ENCODE measurements at regions of chr2 and their contacts with region 1.

Region 1: DNA sequence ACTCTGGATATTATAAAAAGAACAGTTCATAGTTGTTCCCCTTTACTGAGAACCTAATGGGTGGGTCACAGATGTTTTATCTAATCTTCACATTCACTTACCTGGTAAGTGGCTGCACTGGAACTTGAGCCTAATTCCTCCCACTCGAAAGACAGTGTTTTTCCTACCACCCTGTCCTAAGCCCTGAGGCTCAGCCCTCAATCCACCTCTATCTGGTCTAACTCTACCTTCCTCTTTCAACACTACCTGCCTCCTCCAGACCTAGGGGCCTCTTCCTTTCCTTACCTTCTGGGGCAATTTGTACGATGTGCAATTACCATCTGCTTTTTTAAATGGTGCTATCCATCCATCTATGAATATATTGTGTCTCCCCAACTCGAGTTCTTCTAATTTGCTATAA is 9.7 kb upstream of the KIF3C start:
- DNase-seq: no peak
- H3K4me3 ChIP-seq: no peak overlapping the region
- CTCF ChIP-seq: no peak

Region 2: GRCh38 chr2:25586726-25587144 is 405.2 kb before region 1 on chr2:
- CTCF ChIA-PET with region 1: no interaction called
- POLR2A ChIA-PET with region 1: no interaction called
- DNase-seq: no peak
- H3K4me3 ChIP-seq: no peak overlapping the region
- CTCF ChIP-seq: no peak

Region 3: GRCh38 chr2:25976983-25977741 is 14.8 kb before region 1 on chr2:
- CTCF ChIA-PET with region 1: interaction called, 27 read pairs
- POLR2A ChIA-PET with region 1: no interaction called
- DNase-seq: no peak
- H3K4me3 ChIP-seq: no peak overlapping the region
- CTCF ChIP-seq: no peak

Region 4: DNA sequence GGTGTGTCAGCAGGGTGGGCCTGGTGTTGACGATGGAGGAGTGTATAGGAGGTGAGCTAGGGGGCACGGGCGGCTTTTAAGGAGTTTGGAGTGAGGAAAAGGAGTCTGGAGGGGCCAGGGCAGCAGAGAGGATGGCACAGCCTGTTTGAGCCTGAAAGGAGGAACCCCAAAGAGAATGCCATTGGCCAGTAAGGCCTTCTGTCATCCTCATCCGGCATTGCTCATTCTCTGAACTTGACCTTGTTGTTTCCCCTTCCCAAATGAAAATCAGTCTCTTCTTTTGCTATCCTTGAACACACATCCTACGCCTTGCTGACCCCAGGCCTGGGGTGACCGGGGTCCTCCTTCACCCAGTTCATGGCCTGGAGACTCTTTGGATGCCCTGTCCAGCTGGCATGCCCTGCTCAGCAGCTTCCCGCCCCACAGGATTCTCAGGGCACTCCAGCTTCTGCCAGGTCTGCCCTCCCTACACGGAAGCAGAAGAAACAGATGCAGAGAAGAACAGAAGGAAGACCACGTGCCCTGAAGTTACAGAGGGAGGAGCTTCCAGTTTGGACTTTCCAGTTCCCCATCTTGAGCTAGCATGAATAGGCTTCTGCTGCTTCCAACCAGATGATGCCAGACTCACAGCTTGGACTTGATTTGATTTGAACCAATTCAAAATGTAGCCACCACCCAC is 10.8 kb after region 1 on chr2:
- CTCF ChIA-PET with region 1: interaction called, 19 read pairs
- POLR2A ChIA-PET with region 1: no interaction called
- DNase-seq: no peak
- H3K4me3 ChIP-seq: no peak overlapping the region
- CTCF ChIP-seq: no peak

Region 5: DNA sequence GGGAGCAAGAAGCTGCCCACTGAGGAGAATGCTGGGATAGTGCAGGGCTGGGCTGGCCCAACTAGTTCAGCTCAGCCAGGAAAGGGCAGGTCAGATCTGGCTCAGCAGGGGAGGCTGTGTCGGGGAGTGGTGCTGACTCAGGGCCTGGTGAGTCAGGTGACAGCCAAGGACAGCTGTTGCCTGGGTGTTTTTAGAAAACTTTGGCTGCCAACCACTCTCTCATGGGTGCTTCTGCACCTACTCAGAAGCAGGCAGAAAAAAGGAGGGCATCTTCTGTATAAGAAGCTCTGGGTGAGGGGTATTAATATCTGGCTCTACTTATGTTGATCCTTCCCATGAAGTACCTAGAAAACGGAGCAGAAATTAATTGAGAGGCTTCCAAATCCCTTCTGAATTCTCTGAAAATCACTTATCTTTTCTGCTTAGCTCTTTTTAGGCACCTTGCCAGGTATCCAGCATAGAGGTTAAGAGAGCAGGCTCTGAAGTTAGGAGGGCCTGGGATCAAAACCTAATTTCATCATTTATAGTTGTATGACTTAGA is 26.3 kb after region 1 on chr2:
- CTCF ChIA-PET with region 1: interaction called, 14 read pairs
- POLR2A ChIA-PET with region 1: no interaction called
- DNase-seq: no peak
- H3K4me3 ChIP-seq: no peak overlapping the region
- CTCF ChIP-seq: no peak

Region 6: DNA sequence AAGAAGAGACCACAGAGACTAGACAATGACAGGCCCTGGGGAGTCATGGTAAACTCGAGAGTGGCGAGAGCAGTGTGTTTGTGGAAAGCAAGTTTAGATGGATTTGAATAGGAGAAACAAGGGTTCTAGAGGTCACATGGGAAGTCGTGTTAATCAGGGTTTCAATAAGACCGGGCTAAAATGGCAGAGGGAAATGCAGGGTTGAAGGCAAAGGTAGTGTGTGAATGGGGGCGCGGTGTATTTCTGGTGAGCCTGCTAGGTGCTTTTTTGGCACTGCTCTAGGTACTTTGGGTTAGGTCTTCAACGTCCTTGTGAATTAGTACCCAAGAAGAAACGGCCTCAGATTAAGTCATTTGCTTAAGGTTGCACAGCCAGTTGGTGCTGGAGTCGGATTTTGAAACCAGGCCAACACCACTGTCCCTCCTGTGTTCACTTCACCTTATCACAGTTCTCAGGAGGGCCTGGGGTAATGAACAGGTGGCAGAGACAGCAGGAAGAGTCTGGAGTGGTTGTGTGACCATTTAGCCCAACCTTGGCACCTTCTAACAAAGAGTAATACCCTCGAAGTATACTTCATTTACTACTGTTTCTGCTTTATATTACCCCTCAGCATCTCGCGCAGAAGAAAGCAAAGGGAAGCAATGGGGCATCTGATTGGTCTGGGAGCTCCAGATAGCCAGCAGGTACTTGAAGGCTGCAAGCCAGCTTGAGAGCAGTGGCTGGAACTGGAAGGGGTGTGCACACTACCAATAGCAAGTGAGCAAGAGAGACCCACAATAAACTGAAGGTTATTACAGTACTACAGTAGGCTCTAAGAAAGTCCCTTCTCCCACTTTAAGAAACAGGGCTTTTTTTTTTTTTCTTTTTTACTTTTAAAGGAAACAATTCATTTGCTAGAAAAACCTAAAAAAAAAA is 147.6 kb after region 1 on chr2:
- CTCF ChIA-PET with region 1: interaction called, 189 read pairs
- POLR2A ChIA-PET with region 1: no interaction called
- DNase-seq: no peak
- H3K4me3 ChIP-seq: no peak overlapping the region
- CTCF ChIP-seq: no peak

Measured in AG04449 (cell line).